ENCODE measurements at regions of chr10 and their contacts with region 1.

Region 1: DNA sequence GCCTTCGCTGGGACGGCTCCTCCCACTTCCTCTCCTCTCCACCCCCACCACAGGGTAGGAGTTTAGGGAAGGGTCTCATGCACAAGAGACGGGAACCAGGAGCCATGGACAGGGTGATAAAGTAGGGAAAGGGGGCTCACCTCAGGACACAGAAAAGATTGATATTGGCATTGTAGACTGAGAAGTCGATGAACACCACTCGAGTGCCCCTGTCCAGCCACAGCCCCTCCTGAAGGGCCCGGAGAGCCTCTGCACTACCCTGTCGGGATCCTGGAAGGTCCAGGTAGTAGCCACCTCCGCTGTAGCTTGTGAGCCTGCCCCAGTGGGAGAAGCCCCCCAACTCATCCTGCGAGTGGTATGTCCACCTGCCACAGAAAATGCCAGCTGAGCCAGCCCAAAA is 10.8 kb upstream of the BLOC1S2 start:
- DNase-seq: no peak
- ATAC-seq: peak in 1 of 2 experiments; percentile 14; a peak in 1 of 6 replicates
- H3K4me3 ChIP-seq: no peak overlapping the region
- H3K27ac ChIP-seq: no peak overlapping the region
- H3K4me1 ChIP-seq: peaks cover 31% of the 10 kb centered on the region
- CTCF ChIP-seq: no peak
- EP300 ChIP-seq: no peak
- POLR2A ChIP-seq: no peak
- RAD21 ChIP-seq: no peak

Region 2: GRCh38 chr10:100238429-100238828 is 58.8 kb before region 1 on chr10:
- CTCF ChIA-PET with region 1: no interaction called
- POLR2A ChIA-PET with region 1: no interaction called
- DNase-seq: no peak
- ATAC-seq: no peak
- H3K4me3 ChIP-seq: no peak overlapping the region
- H3K27ac ChIP-seq: no peak overlapping the region
- H3K4me1 ChIP-seq: no peaks in the 10 kb centered on the region
- CTCF ChIP-seq: no peak
- EP300 ChIP-seq: no peak
- POLR2A ChIP-seq: no peak
- RAD21 ChIP-seq: no peak

Region 3: GRCh38 chr10:100311307-100311706 is 14.1 kb after region 1 on chr10:
- CTCF ChIA-PET with region 1: interaction called, 10 read pairs
- POLR2A ChIA-PET with region 1: no interaction called
- DNase-seq: peak in 1 of 2 experiments; percentile 20
- ATAC-seq: peak; percentile 38 to 60; a peak in 4 of 6 replicates
- H3K4me3 ChIP-seq: no peak overlapping the region
- H3K27ac ChIP-seq: peak overlapping the region in 1 of 2 experiments; percentile 44; a peak in 3 of 6 replicates
- H3K4me1 ChIP-seq: peaks cover 26% of the 10 kb centered on the region
- CTCF ChIP-seq: no peak
- EP300 ChIP-seq: no peak
- POLR2A ChIP-seq: no peak
- RAD21 ChIP-seq: no peak

Region 4: DNA sequence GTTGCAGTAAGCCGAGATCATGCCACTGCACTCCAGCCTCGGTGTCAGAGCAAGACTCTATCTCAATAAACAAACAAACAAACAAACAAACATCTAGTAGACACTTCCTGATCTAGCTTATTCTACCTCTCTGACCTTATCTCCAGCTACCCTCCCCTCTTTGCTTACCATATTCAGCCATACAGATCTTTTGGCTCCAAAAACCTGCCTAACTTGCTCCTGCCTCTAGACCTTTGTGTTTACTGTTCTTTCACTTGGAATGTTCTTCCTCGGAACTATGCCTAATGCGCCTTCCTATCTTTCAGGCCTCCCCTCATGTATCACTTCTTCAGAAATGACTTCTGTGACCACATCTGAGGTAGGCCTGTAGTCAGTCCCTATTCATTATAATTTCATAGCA is 145.3 kb after region 1 on chr10:
- CTCF ChIA-PET with region 1: no interaction called
- POLR2A ChIA-PET with region 1: no interaction called
- DNase-seq: no peak
- ATAC-seq: no peak
- H3K4me3 ChIP-seq: no peak overlapping the region
- H3K27ac ChIP-seq: no peak overlapping the region
- H3K4me1 ChIP-seq: no peaks in the 10 kb centered on the region
- CTCF ChIP-seq: no peak
- EP300 ChIP-seq: no peak
- POLR2A ChIP-seq: no peak
- RAD21 ChIP-seq: no peak